ENCODE measurements at regions of chr6 and their contacts with region 1.

Region 1: DNA sequence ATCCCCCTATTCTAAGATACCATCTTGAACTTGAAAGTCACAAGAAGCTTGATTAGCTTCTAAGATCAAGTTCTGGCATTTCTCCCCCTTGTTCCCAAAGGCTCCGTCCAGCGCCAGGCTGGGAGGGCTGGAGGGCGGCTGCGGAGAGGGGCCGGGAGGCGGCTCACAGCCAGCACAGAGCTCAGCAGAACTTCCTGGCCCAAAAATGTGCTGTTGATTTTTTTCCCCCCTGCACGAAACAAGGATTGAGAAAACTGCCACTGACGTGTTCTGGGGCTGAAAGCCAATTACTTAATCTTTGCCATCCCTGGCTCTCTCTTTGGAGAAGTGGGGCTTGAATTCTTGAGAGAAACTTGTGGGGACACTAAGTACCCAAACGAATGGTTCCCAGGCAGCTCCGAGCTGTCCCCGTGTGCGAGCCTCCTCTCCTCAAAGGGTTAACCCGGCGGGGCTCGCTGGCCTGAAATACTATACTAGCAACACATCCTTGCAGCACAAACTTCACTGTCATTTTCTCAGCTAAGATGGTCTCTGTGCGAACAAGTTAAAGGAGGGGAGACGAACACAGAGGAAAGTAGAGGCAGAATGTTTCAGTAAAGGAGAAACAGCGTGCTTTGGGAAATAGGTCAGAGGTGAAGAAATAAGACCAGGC is 452 bp downstream of the TRAF3IP2 start:
- DNase-seq: peak; percentile 73 to 83 (median 79)
- ATAC-seq: peak; percentile 52 to 64 (median 62)
- H3K4me3 ChIP-seq: peak overlapping the region; percentile 41 to 88 (median 63)
- H3K27ac ChIP-seq: peak overlapping the region; percentile 91 to 99 (median 95)
- H3K4me1 ChIP-seq: peaks cover 11 to 61% (median 50%) of the 10 kb centered on the region in 12 donors
- H3K27me3 ChIP-seq: no peaks in the 10 kb centered on the region
- CTCF ChIP-seq: no peak
- POLR2A ChIP-seq: no peak

Region 2: DNA sequence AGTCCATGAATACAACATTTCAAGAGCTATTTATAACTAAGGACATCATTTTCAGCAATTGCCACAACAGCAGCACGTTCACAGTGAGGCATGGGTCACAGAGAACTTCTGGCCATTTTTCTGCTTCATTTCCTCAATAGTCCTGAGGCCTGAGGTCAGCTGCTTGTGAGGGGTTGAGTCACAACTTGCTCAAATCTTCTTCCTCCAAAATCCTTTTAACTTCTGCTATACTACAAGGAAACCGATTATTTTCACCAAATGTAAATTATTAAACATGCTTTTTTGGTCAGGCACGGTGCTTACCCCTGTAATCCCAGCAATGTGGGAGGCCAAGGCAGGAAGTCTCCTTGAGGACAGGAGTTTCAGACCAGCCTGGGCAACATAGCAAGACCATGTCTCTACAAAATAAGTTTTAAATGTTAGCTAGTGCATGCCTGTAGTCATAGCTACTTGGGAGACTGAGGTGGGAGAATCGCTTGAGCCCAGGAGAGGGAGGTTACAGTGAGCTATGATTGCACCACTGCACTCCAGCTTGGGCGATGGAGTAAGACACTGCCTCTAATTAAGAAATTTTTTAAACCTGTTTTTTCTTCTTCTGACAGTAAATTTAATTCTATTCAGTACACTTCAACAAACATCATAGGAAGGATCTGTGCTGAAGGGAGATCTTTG is 529.1 kb before region 1 on chr6:
- intact Hi-C with region 1: no loop called
- DNase-seq: no peak
- ATAC-seq: peak in 3 of 4 donors; percentile 56 to 71 (median 58)
- H3K4me3 ChIP-seq: no peak overlapping the region
- H3K27ac ChIP-seq: peak overlapping the region in 1 of 12 donors; percentile 85
- H3K4me1 ChIP-seq: peaks cover 0 to 8% (median 0%) of the 10 kb centered on the region in 12 donors
- H3K27me3 ChIP-seq: peaks cover 0 to 11% (median 0%) of the 10 kb centered on the region in 9 donors
- CTCF ChIP-seq: no peak
- POLR2A ChIP-seq: no peak

Region 3: DNA sequence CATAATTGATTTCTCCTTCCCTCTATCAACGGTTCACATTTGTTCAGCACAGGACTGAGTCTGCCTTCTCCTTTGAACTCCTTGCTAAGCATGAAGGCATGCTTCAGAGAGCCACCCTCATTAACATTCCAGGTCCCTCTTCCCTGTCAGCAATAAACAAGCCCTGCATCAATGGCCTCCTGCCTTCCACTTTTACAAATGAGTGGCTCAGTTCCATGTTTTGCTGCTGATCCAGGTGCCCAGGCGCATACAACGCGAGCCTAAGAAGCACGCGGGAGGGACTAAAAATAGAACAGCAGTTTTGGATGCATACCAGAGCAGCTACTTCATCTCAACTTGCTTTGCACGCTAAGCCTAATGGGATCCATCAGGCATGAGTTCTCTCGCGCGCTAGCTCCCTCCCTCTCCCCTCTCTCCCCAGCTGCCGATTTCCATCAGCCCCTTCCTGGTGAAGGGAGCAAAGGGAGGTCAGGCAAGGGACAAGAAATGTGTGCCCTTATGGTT is 52.9 kb before region 1 on chr6:
- intact Hi-C with region 1: loop called in 3 of 10 experiments (anchors 2 to 10 kb)
- DNase-seq: peak in 4 of 5 donors; percentile 70 to 78 (median 76)
- ATAC-seq: peak; percentile 90 to 95 (median 94)
- H3K4me3 ChIP-seq: peak overlapping the region in 2 of 12 donors; percentile 11 to 14
- H3K27ac ChIP-seq: peak overlapping the region; percentile 8 to 82 (median 68)
- H3K4me1 ChIP-seq: peaks cover 8 to 43% (median 30%) of the 10 kb centered on the region in 12 donors
- H3K27me3 ChIP-seq: no peaks in the 10 kb centered on the region
- CTCF ChIP-seq: no peak
- POLR2A ChIP-seq: no peak

Region 4: DNA sequence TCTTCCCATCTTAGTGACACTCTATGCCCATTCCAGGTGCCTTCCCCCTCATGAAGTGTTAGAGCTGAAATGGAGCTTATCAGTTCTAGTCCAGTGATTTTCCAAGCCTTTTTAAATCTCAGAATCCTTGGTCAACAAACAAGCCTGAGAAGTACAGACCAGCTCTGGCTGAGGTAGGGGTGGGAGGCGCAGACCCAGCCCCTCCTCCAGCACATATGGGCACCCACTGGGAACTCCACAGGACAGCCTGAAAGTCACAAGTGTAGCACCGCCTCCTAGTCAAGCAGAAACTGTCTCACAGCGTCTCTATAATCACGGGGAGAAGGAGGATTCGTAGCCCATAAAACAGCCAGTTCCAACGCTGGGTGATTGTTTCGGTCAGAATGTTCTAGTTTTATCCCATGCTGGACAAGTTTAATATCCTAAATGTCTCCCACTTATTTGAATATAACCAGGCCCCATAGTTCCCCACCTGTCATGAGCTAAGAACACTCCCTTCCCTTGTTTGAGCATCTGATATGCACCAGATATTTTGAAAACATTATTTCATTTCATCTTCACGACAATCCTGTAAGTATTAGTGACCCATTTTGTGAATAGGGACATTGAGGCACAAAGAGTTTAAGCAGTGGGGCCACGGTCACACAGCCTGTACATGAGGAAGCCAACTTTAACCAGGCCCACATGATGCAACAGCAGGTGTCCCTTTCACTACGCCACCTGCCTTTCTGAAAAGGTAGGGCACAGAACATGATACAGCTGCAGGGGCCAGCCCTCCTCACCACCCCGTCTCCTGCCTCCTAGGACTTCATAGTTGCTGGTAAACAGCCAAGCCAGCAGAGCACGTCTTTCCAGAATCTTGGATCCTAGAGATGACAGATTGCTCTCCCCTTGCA is 39.7 kb before region 1 on chr6:
- intact Hi-C with region 1: loop called in 4 of 10 experiments (anchors 2 to 5 kb)
- DNase-seq: no peak
- ATAC-seq: no peak
- H3K4me3 ChIP-seq: no peak overlapping the region
- H3K27ac ChIP-seq: peak overlapping the region in 8 of 12 donors; percentile 23 to 82 (median 50)
- H3K4me1 ChIP-seq: peaks cover 11 to 62% (median 46%) of the 10 kb centered on the region in 12 donors
- H3K27me3 ChIP-seq: no peaks in the 10 kb centered on the region
- CTCF ChIP-seq: no peak
- POLR2A ChIP-seq: no peak

Region 5: DNA sequence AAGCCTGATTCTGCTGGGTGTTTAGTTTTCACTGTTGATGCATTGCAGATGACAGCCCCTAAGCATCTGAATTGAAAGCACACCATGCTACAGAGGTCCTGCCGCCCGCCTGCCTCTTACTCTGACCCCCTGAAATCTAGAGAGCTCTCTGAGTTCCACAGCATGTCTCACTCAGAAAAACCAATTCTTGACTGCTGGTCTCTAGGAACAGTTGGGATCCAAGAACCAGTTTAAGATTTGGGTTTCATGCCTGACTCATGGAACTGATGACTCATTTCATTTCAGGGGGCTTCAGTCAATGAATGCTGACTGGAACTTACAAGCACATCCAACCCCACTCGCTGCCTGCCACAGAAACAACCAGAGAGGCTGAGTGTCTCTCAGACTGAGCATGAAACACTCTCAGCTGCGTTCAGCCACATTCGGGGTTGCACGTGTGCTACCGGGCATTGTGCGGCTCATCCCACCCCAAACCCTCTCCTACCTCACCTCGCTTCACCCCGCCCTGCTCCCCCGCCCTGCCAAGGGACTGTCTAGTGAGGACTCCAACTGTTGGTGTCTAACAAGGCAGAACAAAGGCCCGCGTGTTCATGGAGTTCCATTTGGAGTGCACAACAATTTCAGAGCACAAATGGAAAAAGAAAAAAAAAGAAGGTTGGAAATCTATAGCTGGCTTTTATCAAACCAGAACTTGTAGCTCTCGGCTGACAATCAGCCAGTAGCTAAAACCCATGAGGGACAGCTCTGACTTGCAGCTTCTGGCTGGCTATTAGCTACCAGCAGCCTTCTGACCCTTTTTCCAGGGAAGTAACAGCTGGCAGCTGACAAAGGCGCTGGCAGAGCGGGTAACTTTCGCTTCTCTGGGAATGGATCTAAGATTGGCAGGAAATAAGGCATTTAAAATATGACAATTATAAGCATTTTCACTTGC is 20.5 kb after region 1 on chr6:
- intact Hi-C with region 1: loop called in 2 of 10 experiments (anchors 1 to 2 kb)
- DNase-seq: peak in 3 of 5 donors; percentile 53 to 55 (median 53)
- ATAC-seq: peak; percentile 63 to 78 (median 71)
- H3K4me3 ChIP-seq: peak overlapping the region in 10 of 12 donors; percentile 7 to 53 (median 38)
- H3K27ac ChIP-seq: peak overlapping the region; percentile 33 to 89 (median 72)
- H3K4me1 ChIP-seq: peaks cover 0 to 41% (median 25%) of the 10 kb centered on the region in 12 donors
- H3K27me3 ChIP-seq: no peaks in the 10 kb centered on the region
- CTCF ChIP-seq: no peak
- POLR2A ChIP-seq: no peak